Esophagus muscularis mucosa (tissue), 4 donors: ENCODE measurements at regions of chr1 and their contacts with region 1.

Region 1: GRCh38 chr1:222713091-222713961 is 962 bp downstream of the BROX start:
- DNase-seq: peak; percentile 97
- H3K4me3 ChIP-seq: peak overlapping the region; percentile 68 to 96 (median 78)
- H3K27ac ChIP-seq: peak overlapping the region; percentile 92 to 98 (median 96)
- H3K4me1 ChIP-seq: peaks cover 14 to 46% (median 39%) of the 10 kb centered on the region in 4 donors
- H3K27me3 ChIP-seq: no peaks in the 10 kb centered on the region
- CTCF ChIP-seq: peak in 1 of 3 experiments; percentile 11
- EP300 ChIP-seq: no peak
- POLR2A ChIP-seq: no peak

Region 2: GRCh38 chr1:222582099-222582774 is 131.1 kb before region 1 on chr1:
- intact Hi-C with region 1: no loop called
- DNase-seq: no peak
- H3K4me3 ChIP-seq: no peak overlapping the region
- H3K27ac ChIP-seq: no peak overlapping the region
- H3K4me1 ChIP-seq: peaks cover 0 to 7% (median 2%) of the 10 kb centered on the region in 4 donors
- H3K27me3 ChIP-seq: no peaks in the 10 kb centered on the region
- CTCF ChIP-seq: no peak
- EP300 ChIP-seq: no peak
- POLR2A ChIP-seq: no peak

Region 3: GRCh38 chr1:222643938-222644635 is 69.2 kb before region 1 on chr1:
- intact Hi-C with region 1: loop called (anchors 10 kb)
- DNase-seq: peak; percentile 99
- H3K4me3 ChIP-seq: peak overlapping the region; percentile 66 to 90 (median 84)
- H3K27ac ChIP-seq: peak overlapping the region; percentile 89 to 93 (median 90)
- H3K4me1 ChIP-seq: peaks cover 16 to 20% (median 16%) of the 10 kb centered on the region in 4 donors
- H3K27me3 ChIP-seq: no peaks in the 10 kb centered on the region
- CTCF ChIP-seq: peak in 1 of 3 experiments; percentile 40
- EP300 ChIP-seq: no peak
- POLR2A ChIP-seq: peak; percentile 56

Region 4: DNA sequence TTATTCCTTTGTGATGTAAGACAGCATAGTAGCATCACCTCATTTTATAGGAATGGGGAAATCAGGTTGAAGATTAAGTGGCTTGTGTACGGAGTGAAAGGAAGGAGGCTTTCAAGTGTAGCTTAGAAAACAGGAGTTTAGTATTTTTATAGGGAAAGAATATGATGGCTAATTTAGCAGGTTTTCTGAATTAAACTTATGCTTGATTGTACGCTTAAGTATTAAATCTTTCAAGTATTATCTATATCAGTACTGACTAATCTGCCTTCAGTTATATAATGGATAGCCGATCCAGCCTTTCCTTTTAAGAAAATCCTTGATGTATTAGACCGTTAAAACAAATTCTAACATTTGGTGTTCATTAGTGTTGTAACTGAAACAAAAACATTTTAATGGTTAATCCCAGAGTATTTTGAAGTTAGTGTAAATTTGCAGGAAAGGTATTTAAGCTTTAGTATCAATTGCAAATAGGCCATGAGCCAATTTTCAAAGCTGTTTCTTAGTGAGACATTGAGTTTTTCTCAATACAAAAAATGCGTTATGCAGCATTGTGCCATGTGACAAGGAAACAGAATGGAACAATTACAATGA is 131.0 kb after region 1 on chr1:
- intact Hi-C with region 1: no loop called
- DNase-seq: no peak
- H3K4me3 ChIP-seq: no peak overlapping the region
- H3K27ac ChIP-seq: no peak overlapping the region
- H3K4me1 ChIP-seq: peaks cover 0 to 12% (median 0%) of the 10 kb centered on the region in 4 donors
- H3K27me3 ChIP-seq: no peaks in the 10 kb centered on the region
- CTCF ChIP-seq: no peak
- EP300 ChIP-seq: no peak
- POLR2A ChIP-seq: no peak